ENCODE measurements at regions of chr17 and their contacts with region 1.

Region 1: DNA sequence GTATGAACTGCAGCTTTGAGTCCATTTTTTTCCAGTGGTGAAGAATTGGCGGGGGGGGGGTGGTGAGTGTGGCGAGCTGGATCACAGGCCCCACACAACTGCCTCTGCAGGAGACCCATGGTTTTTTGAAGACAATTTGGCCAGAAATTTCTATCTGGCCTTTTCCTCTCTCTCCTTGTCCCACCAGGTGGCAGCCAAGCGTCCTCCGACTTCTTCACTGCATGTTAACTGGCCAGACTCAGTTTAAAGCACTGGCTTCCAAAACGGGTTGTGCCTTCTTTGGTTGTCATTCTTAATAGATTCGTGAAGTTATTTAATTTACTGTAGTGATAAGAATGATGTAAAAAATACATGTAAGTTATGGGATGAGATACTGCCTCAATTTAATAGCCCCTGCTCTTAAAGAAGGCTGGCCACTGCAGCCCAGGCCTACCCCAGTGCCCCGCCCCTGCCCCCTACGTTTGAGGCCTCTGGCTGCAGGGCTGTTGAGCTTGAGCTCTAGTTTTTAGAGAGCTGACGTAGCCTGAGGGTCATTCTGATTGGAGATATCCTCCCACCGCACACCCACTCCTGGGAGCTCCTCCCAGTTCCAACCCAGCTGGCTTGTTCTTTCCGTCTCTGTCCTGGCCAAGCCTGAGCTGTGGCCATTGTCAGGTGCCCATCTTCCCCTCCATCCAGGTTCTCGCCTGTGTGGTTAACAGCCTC is 36.4 kb downstream of the AKAP1 start:
- DNase-seq: no peak
- H3K4me3 ChIP-seq: no peak overlapping the region
- H3K27ac ChIP-seq: no peak overlapping the region
- H3K4me1 ChIP-seq: no peaks in the 10 kb centered on the region
- H3K27me3 ChIP-seq: no peaks in the 10 kb centered on the region
- CTCF ChIP-seq: peak; percentile 25 to 34

Region 2: GRCh38 chr17:57071991-57072944 is 49.2 kb before region 1 on chr17:
- intact Hi-C with region 1: loop called (anchors 10 kb)
- DNase-seq: no peak
- H3K4me3 ChIP-seq: no peak overlapping the region
- H3K27ac ChIP-seq: peak overlapping the region in 1 of 2 donors; percentile 32
- H3K4me1 ChIP-seq: peaks cover 0 to 15% (median 0%) of the 10 kb centered on the region in 4 donors
- H3K27me3 ChIP-seq: no peaks in the 10 kb centered on the region
- CTCF ChIP-seq: no peak

Measured in tibial artery (tissue), 4 donors.